Activated CD4-positive, alpha-beta memory T cell treated with anti-CD3 and anti-CD28 coated beads, Interleukin-2, amount 10 ng/mL, durations not matched to agents 7 days and 5 days (primary cell): ENCODE measurements at regions of chr17 and their contacts with region 1.

Region 1: DNA sequence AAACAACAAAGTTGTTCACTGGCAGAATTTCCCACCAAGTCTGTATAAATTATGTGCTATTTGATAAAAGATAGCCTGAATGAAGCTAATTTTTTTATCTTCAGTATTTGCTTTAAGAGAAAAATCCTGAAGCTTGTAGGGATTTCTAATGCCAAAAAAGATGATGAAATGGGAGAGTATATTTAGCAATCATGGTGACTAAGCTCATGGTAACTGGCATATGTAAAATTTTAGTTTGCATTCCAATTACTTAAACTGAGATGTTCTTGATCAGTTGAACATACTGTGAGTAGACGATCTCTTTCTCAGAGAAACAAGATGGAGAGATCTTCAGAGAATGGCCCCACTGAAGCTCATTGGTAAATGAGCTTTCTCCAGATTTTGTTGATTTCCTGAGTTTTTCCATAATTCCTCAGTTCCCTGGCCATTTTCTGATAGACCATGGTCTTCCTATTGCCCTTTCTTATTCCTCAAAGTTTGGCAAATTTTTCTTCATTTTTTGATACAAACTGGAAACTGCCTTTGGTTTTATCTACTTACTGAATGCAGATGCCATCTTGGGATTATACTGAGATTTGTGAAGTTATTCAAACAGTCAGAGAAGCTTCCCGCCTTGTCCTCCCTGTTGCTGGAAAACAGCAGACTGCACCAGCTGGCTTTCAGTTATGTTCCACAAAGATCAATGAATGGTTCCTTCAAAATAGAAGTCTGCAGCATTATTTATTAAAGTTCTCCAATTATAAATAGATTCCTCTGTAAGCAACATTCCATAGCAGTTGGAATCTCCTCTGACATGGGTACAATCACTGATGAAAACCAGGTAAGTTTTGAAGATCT is 68.3 kb upstream of the ALOX12 start:
- DNase-seq: no peak
- H3K4me3 Mint-ChIP-seq: no peak overlapping the region
- H3K27ac Mint-ChIP-seq: no peak overlapping the region
- H3K4me1 Mint-ChIP-seq: peaks cover 6% of the 10 kb centered on the region
- H3K27me3 Mint-ChIP-seq: peaks cover 23% of the 10 kb centered on the region

Region 2: DNA sequence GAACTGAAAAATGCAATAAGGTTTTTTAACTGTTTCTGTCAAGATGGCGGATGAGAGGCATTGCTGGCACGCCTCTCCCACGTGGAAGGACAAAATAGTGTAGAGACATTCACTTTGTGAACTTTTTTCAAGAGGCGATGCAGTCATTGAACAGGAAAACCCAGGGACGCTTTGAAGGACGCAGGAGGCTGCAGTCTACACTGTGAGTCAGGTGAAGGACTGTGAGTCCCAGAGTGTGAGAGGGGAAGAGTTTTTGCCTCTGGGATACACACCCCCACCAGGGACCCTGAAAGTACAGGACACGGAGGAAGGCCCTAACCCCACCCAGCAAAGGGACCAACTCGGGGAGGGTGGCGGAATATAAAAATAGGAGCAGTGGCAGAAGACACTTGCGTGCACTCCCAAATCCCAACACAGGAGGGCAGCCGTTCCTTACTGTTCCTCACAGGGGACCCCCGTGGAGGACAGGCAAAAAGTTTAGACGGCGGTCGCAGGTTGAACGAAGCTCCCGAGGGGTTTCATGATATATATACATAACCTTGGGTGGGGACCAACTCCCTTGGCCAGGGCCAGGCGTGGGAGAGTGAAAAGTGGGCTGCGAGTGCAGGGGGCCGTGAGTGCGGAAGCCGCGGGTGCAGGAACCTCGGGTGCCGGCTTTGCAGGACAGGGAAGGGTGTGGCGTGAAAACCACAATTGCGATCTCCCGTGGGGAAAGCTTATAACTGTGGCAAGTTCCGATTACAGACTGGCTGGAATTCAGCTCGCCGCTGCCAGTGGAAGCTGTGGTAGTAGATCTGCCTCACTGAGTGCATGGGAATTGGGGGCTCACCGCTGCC is 13.7 kb before region 1 on chr17:
- CTCF ChIA-PET with region 1: interaction called, 19 read pairs
- POLR2A ChIA-PET with region 1: no interaction called
- DNase-seq: peak; percentile 74
- H3K4me3 Mint-ChIP-seq: peak overlapping the region; percentile 41
- H3K27ac Mint-ChIP-seq: no peak overlapping the region
- H3K4me1 Mint-ChIP-seq: peaks cover 37% of the 10 kb centered on the region
- H3K27me3 Mint-ChIP-seq: peaks cover 52% of the 10 kb centered on the region

Region 3: GRCh38 chr17:6948562-6948961 is 21.1 kb after region 1 on chr17:
- CTCF ChIA-PET with region 1: no interaction called
- POLR2A ChIA-PET with region 1: no interaction called
- DNase-seq: no peak
- H3K4me3 Mint-ChIP-seq: no peak overlapping the region
- H3K27ac Mint-ChIP-seq: no peak overlapping the region
- H3K4me1 Mint-ChIP-seq: peaks cover 10% of the 10 kb centered on the region
- H3K27me3 Mint-ChIP-seq: no peaks in the 10 kb centered on the region

Region 4: GRCh38 chr17:7004398-7005253 is 77.1 kb after region 1 on chr17:
- CTCF ChIA-PET with region 1: interaction called, 10 read pairs
- POLR2A ChIA-PET with region 1: no interaction called
- DNase-seq: peak; percentile 36
- H3K4me3 Mint-ChIP-seq: no peak overlapping the region
- H3K27ac Mint-ChIP-seq: peak overlapping the region; percentile 31
- H3K4me1 Mint-ChIP-seq: peaks cover 27% of the 10 kb centered on the region
- H3K27me3 Mint-ChIP-seq: no peaks in the 10 kb centered on the region